Activated naive CD4-positive, alpha-beta T cell treated with anti-CD3 and anti-CD28 coated beads for 36 hours (primary cell): ENCODE measurements at regions of chr7 and their contacts with region 1.

Region 1: DNA sequence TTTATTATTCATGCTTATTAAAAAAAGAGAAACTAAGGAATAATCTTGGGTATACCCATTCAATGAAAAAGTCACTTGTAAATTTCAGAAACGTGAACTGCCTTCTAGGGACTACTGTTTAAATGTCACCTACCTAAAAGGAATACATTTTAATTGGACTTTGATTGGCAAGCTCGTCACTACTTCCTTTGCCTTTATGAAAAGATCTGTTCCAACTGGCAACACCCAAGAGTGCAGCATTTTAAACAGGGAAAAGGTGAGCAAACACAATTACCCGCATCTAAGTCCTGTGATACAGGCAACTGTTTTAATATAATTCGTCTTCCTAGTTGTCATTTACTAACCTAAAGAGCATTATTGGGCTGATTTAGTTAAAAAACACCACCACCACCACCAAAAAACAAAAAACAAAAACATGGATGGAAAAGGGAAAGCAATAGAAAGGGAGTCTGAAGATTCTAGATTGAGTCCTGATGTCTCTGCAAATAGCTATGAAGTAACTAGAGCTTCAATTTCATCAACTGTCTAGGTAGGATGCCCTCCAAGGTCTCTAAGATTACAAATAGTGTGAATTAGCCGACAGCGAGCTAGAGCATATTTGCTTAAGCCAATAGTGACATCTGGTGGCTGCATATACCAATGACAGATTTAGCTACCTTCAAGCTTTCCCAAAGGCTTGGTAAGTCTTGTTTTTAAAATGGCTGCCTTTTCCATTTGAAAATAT is 33.8 kb upstream of the ICA1 start:
- DNase-seq: peak; percentile 43
- H3K4me3 Mint-ChIP-seq: no peak overlapping the region
- H3K27ac Mint-ChIP-seq: no peak overlapping the region
- H3K4me1 Mint-ChIP-seq: peaks cover 3% of the 10 kb centered on the region
- H3K27me3 Mint-ChIP-seq: peaks cover 3% of the 10 kb centered on the region

Region 2: DNA sequence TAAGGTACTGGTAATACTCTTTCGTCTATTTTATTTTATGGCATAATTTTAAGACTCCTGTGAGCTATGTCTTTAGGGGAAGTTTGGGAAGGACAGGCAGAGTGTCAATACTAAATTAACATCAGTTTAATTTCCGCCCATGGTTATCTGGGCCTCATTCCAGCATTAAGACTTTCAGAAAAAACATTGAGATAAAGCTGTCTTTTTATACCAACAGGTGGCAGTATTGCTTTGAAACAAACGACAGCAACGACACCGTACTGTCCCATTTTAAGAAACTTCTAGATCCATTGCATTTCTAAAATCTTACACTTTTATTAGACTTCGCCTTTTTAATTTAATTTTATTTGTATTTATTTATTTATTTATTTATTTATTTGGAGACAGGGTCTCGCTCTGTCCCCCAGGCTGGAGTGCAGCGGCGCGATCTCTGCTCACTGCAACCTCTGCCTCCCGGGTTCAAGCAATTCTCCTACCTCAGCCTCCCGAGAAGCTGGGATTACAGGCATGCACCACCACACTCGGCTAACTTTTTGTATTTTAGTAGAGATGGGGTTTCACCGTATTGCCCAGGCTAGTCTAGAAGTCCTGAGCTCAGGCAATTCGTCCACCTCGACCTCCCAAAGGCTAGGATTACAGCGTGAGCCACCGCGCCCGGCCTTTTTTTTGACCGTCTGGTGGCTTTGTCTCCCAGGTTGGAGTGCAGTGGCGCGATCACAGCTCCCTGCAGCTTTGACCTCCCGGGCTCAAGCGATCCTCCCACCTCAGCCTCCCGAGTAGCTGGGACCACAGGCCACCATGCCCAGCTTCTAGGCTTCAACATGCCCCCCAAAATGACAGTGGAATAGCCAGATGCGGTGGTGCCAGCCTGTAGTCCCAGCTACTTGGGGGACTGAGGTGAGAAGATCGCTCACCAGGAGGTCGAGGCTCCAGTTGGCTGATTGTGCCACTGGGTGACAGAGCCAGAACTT is 1192.2 kb before region 1 on chr7:
- CTCF ChIA-PET with region 1: interaction called, 8 read pairs
- intact Hi-C with region 1: loop called (anchors 1 kb)
- DNase-seq: no peak
- H3K4me3 Mint-ChIP-seq: no peak overlapping the region
- H3K27ac Mint-ChIP-seq: no peak overlapping the region
- H3K4me1 Mint-ChIP-seq: peaks cover 24% of the 10 kb centered on the region
- H3K27me3 Mint-ChIP-seq: no peaks in the 10 kb centered on the region

Region 3: GRCh38 chr7:7542251-7542835 is 753.5 kb before region 1 on chr7:
- CTCF ChIA-PET with region 1: no interaction called
- intact Hi-C with region 1: loop called (anchors 5 kb)
- DNase-seq: no peak
- H3K4me3 Mint-ChIP-seq: no peak overlapping the region
- H3K27ac Mint-ChIP-seq: no peak overlapping the region
- H3K4me1 Mint-ChIP-seq: no peaks in the 10 kb centered on the region
- H3K27me3 Mint-ChIP-seq: no peaks in the 10 kb centered on the region

Region 4: DNA sequence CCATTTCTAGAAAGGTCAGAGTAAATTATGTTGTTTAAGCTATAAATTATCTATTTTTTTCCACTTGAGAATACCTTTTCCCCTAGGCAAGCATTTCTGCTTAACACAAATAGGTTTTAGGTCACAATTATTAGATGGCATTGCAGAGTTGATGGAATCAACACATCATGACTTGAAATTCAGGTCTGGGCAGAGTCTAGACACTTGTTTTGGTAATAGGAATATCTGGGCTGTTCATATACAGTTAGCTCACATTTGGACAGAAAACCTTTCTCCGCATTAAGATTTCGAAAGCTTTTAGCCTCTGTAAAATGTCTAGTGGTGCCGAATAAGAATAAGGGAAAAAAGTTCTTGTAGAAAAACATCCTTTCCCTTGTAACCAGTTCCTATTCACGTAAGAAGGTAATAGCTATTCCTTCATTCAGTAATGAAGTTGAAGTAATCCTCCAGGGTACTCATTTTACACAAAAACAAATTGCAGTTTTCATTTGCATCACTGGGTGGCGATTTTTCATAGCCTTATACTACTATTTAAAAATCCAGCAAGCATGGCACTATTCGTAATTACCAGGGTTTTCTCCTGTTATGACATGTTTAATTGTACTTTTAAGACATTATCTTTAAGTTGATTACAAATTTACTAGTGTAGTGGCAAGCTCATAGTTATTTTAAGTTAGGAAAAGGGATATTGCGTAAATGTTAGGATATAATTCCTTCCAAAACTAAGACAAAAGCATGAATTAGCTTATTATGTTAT is 614.4 kb before region 1 on chr7:
- CTCF ChIA-PET with region 1: interaction called, 3 read pairs
- intact Hi-C with region 1: loop called (anchors 1 kb)
- DNase-seq: peak; percentile 66
- H3K4me3 Mint-ChIP-seq: no peak overlapping the region
- H3K27ac Mint-ChIP-seq: peak overlapping the region; percentile 9
- H3K4me1 Mint-ChIP-seq: peaks cover 36% of the 10 kb centered on the region
- H3K27me3 Mint-ChIP-seq: no peaks in the 10 kb centered on the region

Region 5: DNA sequence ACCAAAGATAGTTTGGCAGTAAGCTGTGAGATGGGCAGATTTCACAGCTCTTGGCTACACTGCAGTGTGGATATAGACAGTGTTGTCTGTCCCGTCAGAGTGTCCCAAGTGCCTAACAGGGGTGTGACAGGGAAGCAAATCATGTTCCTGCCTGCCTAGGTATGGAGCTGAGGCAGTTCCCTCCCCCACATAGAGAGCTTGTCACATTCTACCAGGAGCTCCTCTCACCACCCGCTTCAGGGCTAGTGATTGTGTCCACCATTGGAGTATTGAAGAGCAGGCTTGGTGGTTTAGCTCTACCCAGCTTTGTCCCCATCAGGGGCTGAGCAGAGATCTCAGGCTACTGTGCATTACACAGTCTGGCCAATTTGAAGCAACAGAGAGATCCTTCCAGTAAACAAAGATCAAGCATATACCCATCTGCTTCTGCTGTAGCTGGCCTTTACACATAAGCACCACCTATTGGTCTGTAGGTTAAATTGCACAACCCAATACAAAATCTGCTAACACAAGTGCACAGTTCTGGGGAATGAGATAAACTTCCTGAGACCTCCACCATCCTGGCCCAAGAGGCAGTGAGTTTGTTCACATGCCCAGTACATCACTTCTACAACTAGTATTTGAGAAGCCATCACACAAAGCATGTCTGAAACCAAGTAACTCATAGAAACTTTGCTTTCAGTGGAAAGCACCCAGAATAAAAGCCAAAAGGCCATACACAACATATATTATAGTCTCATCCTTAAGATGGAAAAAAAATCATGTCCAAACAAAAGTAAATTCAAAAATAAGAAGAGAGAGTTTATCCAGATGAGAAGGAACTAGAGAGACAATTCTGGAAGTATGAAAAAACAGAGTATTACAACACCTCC is 259.9 kb before region 1 on chr7:
- CTCF ChIA-PET with region 1: no interaction called
- intact Hi-C with region 1: loop called (anchors 5 kb)
- DNase-seq: no peak
- H3K4me3 Mint-ChIP-seq: no peak overlapping the region
- H3K27ac Mint-ChIP-seq: no peak overlapping the region
- H3K4me1 Mint-ChIP-seq: peaks cover 20% of the 10 kb centered on the region
- H3K27me3 Mint-ChIP-seq: no peaks in the 10 kb centered on the region

Region 6: DNA sequence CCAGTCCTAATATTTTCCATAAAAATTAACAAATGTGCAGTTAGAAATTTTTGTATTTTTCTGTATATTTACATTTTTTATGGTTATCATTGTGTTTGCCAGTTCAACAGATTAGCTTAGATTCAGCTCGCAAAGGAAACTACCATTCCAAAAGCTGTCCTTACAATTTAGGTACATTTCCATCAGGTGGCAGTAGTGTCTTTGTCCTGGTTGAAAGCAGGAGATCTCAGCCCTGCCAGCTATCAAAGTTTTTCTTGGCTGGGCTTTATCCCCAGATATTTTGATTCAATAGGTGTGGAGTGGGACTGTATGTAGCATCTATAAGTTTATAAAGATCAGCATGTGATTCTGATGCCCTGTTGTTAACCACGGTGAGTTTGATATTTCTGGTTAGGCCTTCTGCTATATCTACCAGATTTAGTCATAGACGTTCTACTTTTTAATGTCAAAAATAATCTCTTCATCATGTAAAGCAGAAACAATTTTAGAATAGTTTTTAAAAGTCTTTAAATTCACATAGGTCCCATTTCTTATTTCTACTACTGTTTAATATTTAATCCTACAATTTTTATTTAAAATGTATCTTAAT is 18.3 kb before region 1 on chr7:
- CTCF ChIA-PET with region 1: interaction called, 12 read pairs
- intact Hi-C with region 1: no loop called
- DNase-seq: no peak
- H3K4me3 Mint-ChIP-seq: no peak overlapping the region
- H3K27ac Mint-ChIP-seq: no peak overlapping the region
- H3K4me1 Mint-ChIP-seq: no peaks in the 10 kb centered on the region
- H3K27me3 Mint-ChIP-seq: peaks cover 4% of the 10 kb centered on the region